Right cardiac atrium (tissue), 5 donors: ENCODE measurements at regions of chr2 and their contacts with region 1.

Region 1: DNA sequence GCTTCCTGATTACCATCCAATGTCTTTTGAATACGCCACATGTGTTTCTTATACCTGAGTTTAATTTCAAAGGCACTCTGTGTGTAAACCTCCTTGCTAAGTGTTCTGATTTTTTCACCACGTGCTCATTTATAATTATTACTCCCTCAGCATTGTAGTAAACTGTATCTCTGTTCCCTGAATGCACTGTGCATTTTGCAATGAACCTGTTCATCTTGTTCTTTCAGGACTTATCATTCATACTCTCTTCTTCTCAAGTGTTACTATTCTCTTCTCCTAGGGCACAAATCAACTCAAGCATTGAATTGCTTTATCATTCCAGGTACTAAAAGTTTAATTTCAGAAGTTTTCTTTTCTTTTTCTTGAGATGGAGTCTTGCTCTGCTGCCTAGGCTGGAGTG is 383.4 kb upstream of the TRIB2 start:
- DNase-seq: no peak
- ATAC-seq: no peak
- H3K4me3 ChIP-seq: no peak overlapping the region
- H3K27ac ChIP-seq: no peak overlapping the region
- H3K4me1 ChIP-seq: no peaks in the 10 kb centered on the region
- H3K27me3 ChIP-seq: no peaks in the 10 kb centered on the region

Region 2: GRCh38 chr2:12361506-12361905 is 28.2 kb after region 1 on chr2:
- intact Hi-C with region 1: loop called in 1 of 4 experiments (anchors 2 kb)
- DNase-seq: no peak
- ATAC-seq: no peak
- H3K4me3 ChIP-seq: no peak overlapping the region
- H3K27ac ChIP-seq: no peak overlapping the region
- H3K4me1 ChIP-seq: no peaks in the 10 kb centered on the region
- H3K27me3 ChIP-seq: no peaks in the 10 kb centered on the region

Region 3: GRCh38 chr2:13218205-13218604 is 884.9 kb after region 1 on chr2:
- intact Hi-C with region 1: no loop called
- DNase-seq: no peak
- ATAC-seq: no peak
- H3K4me3 ChIP-seq: no peak overlapping the region
- H3K27ac ChIP-seq: no peak overlapping the region
- H3K4me1 ChIP-seq: no peaks in the 10 kb centered on the region
- H3K27me3 ChIP-seq: no peaks in the 10 kb centered on the region